Thyroid gland (tissue), 4 donors: ENCODE measurements at regions of chr7 and their contacts with region 1.

Region 1: GRCh38 chr7:139482662-139483469 is 607 bp downstream of the KLRG2 start:
- DNase-seq: peak; percentile 47 to 50
- H3K4me3 ChIP-seq: peak overlapping the region; percentile 30 to 51 (median 50)
- H3K27ac ChIP-seq: peak overlapping the region in 2 of 3 donors; percentile 29 to 79
- H3K4me1 ChIP-seq: peaks cover 18 to 28% of the 10 kb centered on the region in 2 donors
- H3K27me3 ChIP-seq: no peaks in the 10 kb centered on the region
- CTCF ChIP-seq: no peak
- POLR2A ChIP-seq: no peak

Region 2: DNA sequence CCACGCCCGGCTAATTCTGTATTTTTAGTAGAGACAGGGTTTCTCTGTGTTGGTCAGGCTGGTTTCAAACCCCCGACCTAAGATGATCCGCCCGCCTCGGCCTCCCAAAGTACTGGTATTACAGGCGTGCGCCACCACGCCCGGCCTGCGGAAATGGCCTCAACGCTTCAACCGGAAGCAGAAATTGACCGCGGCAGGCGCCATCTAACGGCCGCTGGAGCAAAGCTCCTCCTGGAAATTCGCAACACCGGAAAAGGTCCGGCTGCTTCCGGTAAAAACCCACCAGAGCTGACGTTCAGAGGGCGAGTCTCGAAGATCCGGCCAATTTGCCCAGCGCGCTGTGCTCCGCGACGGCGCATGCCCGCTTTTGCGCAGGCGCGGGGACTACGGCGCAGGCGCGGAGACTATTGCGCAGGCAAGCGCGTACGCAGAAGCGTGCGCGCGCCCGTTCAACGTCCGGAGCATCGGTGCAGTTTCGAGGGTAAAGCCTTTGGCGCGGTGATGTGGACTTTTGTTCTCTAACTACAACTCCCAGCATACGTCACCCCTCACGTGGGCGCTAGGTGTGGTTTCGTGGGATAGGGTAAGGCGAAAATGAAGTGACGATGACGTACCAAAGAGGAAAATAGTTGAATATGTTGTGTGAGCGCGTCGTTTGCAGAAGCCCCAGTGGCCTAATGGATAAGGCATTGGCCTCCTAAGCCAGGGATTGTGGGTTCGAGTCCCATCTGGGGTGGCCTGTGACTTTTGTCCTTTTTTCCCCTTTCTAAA is 142.6 kb before region 1 on chr7:
- intact Hi-C with region 1: loop called (anchors 10 kb)
- DNase-seq: peak; percentile 100
- H3K4me3 ChIP-seq: peak overlapping the region; percentile 5 to 89 (median 65)
- H3K27ac ChIP-seq: peak overlapping the region; percentile 97 to 100 (median 99)
- H3K4me1 ChIP-seq: peaks cover 6 to 17% of the 10 kb centered on the region in 2 donors
- H3K27me3 ChIP-seq: no peaks in the 10 kb centered on the region
- CTCF ChIP-seq: peak; percentile 18 to 79 (median 65)
- POLR2A ChIP-seq: peak in 1 of 2 donors; percentile 75

Region 3: GRCh38 chr7:139855498-139856270 is 372.8 kb after region 1 on chr7:
- intact Hi-C with region 1: no loop called
- DNase-seq: no peak
- H3K4me3 ChIP-seq: no peak overlapping the region
- H3K27ac ChIP-seq: no peak overlapping the region
- H3K4me1 ChIP-seq: no peaks in the 10 kb centered on the region
- H3K27me3 ChIP-seq: no peaks in the 10 kb centered on the region
- CTCF ChIP-seq: no peak
- POLR2A ChIP-seq: no peak